ENCODE measurements at regions of chr11 and their contacts with region 1.

Region 1: DNA sequence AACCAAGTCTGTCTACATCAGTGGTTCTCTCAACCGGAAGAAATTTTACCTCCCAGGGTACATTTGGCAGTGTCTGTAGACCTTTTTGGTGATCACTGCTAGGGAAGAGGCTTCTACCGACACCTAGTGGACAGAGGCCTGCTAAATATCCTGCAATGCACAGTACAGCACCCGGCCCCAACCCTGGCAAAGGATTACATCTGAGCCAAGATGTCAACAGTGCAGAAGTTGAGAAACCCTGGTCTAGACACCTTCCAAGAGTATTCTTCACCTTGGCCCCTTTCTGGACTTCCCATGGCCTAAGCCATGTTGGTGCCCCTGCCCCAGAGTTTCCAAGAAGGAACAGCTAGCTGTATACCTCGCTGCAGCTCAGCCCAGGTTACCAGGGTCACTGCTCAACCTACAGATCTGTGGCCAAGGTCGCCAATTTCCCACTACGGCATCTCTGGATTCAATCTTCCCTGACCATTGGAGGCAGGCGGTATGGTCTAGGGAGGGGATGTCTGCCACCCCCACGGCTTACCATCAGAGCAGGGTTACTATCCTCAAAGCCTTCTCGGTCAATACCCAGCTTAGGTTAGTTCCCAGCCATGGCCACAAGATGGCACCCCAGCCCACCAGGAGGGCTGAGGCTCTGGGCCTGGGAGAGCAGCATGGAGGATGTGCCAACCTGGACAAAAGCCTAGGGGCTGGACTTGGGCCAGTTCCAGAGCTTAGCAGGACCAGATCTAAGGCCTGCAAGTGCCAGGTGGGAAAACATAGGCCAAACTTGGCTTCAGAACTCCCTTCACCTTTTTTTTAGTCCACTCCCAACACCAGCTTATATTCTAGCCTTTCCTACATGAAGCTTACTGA is 3.7 kb upstream of the KCNC1 start:
- DNase-seq: peak; percentile 7
- H3K4me3 ChIP-seq: no peak overlapping the region
- CTCF ChIP-seq: peak; percentile 93

Region 2: GRCh38 chr11:17598700-17599459 is 132.0 kb before region 1 on chr11:
- CTCF ChIA-PET with region 1: interaction called, 14 read pairs
- POLR2A ChIA-PET with region 1: no interaction called
- DNase-seq: peak; percentile 3
- H3K4me3 ChIP-seq: no peak overlapping the region
- CTCF ChIP-seq: peak; percentile 97

Region 3: DNA sequence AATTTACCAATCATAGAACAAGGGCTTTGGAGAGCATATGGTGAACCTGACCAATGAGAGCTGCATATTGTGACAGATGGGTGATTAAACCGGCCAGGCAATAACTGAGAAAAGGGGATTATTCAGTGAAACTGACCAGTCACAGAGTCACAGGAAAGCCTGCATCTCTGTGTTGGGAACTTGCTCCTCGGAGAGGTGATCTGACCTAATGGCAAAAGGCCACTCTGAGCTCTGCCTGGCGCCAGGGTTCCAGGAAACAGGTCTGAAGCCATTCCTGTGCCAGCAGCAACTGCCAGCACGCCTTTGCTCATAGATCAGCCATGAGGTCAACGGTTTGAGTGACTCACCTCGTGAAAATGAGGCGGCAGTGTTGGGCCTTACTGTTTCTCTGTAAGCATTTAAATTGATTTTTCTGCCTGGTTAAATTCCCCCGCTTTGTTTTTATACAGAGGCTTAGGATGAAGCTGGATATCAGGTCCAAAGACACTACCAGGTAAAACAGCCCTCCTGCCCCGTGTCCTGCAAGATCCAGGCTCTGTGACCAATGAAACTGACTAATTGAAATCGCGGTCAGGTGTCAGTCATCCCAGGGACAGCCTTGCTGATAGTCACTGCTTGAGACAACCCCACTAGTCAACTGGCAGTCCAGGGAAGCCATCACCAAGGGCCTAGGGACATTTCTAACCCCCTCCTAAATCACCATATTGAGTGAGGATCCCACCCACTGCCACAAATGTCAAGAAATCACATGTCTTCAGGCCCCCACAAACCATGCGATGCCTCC is 47.3 kb before region 1 on chr11:
- CTCF ChIA-PET with region 1: no interaction called
- POLR2A ChIA-PET with region 1: no interaction called
- DNase-seq: no peak
- H3K4me3 ChIP-seq: no peak overlapping the region
- CTCF ChIP-seq: no peak

Region 4: DNA sequence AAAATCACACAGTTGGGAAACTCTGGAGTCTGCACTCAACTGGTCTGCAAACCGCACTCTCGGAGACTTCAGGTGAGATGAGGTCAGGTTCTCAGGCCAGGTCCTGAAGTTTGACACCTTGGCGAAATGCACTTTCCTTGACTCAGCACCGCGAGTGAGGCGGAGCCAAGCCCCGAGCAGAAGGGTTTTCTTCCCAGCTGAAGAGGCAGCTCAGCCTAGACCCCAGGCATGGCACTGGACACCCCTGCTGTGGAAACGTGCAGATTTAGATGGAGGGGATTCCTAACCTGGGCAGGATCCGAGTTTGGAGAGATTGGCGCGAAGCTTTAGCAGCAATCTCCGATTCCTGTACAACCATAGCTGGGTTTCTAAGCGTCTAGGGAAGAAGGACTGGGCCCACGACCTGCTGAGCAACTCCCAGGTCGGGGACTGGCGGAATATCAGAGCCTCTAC is 12.3 kb before region 1 on chr11:
- CTCF ChIA-PET with region 1: interaction called, 10 read pairs
- POLR2A ChIA-PET with region 1: no interaction called
- DNase-seq: no peak
- H3K4me3 ChIP-seq: no peak overlapping the region
- CTCF ChIP-seq: no peak

Region 5: DNA sequence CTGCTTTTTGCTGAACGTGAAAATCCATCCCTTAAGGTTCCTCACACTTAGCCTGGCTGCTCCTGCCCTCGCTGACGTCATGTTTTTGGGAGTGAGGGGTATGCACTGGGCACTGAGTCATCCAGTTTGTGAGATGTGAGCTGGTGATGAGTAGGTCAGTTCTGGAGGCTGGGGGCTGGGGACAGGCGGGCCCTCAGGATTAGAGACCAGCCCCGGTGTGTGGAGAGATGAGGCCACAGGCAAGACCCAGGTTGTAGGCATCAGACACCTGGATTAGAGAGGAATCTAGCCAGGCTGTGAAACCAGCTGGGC is 12.9 kb after region 1 on chr11:
- CTCF ChIA-PET with region 1: interaction called, 15 read pairs
- POLR2A ChIA-PET with region 1: no interaction called
- DNase-seq: no peak
- H3K4me3 ChIP-seq: no peak overlapping the region
- CTCF ChIP-seq: no peak

Region 6: GRCh38 chr11:17760102-17761029 is 29.5 kb after region 1 on chr11:
- CTCF ChIA-PET with region 1: interaction called, 15 read pairs
- POLR2A ChIA-PET with region 1: no interaction called
- DNase-seq: no peak
- H3K4me3 ChIP-seq: no peak overlapping the region
- CTCF ChIP-seq: peak; percentile 60

Region 7: GRCh38 chr11:17991783-17992433 is 261.1 kb after region 1 on chr11:
- CTCF ChIA-PET with region 1: interaction called, 82 read pairs
- POLR2A ChIA-PET with region 1: no interaction called
- DNase-seq: no peak
- H3K4me3 ChIP-seq: no peak overlapping the region
- CTCF ChIP-seq: peak; percentile 71